ENCODE measurements at regions of chr5 and their contacts with region 1.

Region 1: GRCh38 chr5:132753135-132753987 is 6.1 kb downstream of the CCNI2 start:
- DNase-seq: no peak
- ATAC-seq: peak; percentile 77
- H3K4me3 ChIP-seq: no peak overlapping the region
- H3K27ac ChIP-seq: no peak overlapping the region
- H3K4me1 ChIP-seq: no peaks in the 10 kb centered on the region
- H3K27me3 ChIP-seq: no peaks in the 10 kb centered on the region
- CTCF ChIP-seq: peak in 1 of 3 experiments; percentile 20; a peak in 1 of 6 replicates
- POLR2A ChIP-seq: no peak
- RAD21 ChIP-seq: peak; percentile 47

Region 2: GRCh38 chr5:132736853-132737833 is 16.2 kb before region 1 on chr5 and contains the start of gene KIF3A:
- CTCF ChIA-PET with region 1: interaction called, 10 read pairs
- POLR2A ChIA-PET with region 1: interaction called, 4 read pairs
- RAD21 ChIA-PET with region 1: no interaction called
- intact Hi-C with region 1: no loop called
- DNase-seq: peak; percentile 95
- ATAC-seq: peak; percentile 94
- H3K4me3 ChIP-seq: peak within 1 kb of the TSS; percentile 67 to 88
- H3K27ac ChIP-seq: peak within 1 kb of the TSS; percentile 46
- H3K4me1 ChIP-seq: peaks cover 4 to 20% of the 10 kb centered on the region in 2 experiments; a peak in 3 of 4 replicates
- H3K27me3 ChIP-seq: no peaks in the 10 kb centered on the region
- CTCF ChIP-seq: no peak; a peak in 1 of 6 replicates
- POLR2A ChIP-seq: peak; percentile 63
- RAD21 ChIP-seq: no peak
- total RNA-seq, gene KIF3A: 12.7 TPM